ENCODE measurements at regions of chrX and their contacts with region 1.

Region 1: GRCh38 chrX:75273483-75273882 is 402 bp upstream of the UPRT start:
- DNase-seq: peak in 2 of 10 donors; percentile 16 to 54
- ATAC-seq: peak; percentile 30 to 45
- H3K4me3 Mint-ChIP-seq: peak overlapping the region; percentile 88 to 97 (median 94)
- H3K27ac Mint-ChIP-seq: peak overlapping the region; percentile 93 to 99 (median 97)
- H3K4me1 Mint-ChIP-seq: peaks cover 15 to 53% (median 45%) of the 10 kb centered on the region in 4 donors
- H3K27me3 Mint-ChIP-seq: no peaks in the 10 kb centered on the region

Region 2: DNA sequence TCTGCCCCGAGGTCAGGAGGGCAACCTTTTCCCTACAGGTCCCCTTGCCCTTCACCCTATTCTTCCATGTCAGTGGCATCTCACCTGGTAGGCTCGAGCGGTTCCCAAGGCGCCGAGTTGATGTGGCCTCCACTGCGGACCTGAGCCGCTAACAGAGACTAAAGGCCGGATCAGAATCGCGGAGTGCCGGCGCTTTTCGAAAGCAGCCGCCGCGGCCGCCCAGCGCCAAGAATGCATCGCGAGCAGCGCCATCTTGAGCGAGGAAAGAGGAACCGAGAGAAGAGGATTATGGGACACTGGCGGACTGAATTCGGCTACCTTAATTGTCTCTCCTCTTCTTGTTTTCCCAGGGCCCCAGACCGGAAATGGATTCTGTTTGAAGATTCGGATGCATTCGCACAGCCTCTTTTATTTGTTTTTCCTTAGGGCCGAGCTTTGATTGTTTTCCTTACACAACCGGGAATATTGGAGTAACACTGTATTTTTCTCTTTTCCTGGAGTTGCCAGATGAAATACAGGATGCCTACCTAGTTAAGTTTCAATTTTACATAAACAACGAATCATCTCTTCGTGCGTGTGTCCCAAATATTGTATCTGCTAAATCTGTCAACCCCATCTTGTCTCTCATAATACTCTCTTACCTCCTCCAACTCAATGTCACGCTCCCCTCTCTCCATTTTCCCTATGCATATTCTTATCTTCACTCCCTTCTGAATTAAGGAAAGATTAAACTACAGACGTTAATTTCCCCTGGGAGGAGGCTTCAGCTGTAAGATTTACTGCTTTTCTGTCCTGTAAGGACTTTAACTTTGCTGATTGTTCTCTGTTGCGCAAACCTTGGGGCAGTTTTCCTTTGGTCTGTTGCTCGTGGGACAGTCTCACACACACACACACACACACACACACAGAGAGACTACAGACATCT is 117.2 kb before region 1 on chrX and contains the start of gene ABCB7:
- POLR2A ChIA-PET with region 1: interaction called, 10 read pairs
- DNase-seq: peak; percentile 34 to 80 (median 56)
- ATAC-seq: peak; percentile 94
- H3K4me3 Mint-ChIP-seq: peak within 1 kb of the TSS; percentile 91 to 100 (median 98)
- H3K27ac Mint-ChIP-seq: peak within 1 kb of the TSS; percentile 94 to 100 (median 98)
- H3K4me1 Mint-ChIP-seq: peaks cover 24 to 52% (median 45%) of the 10 kb centered on the region in 4 donors
- H3K27me3 Mint-ChIP-seq: no peaks in the 10 kb centered on the region
- polyA plus RNA-seq, gene ABCB7: 18.6 to 20.2 (median 19.1) TPM